Esophagus squamous epithelium (tissue), 5 donors: ENCODE measurements at regions of chr9 and their contacts with region 1.

Region 1: GRCh38 chr9:128412120-128412790 is 8.4 kb upstream of the CERCAM start:
- DNase-seq: no peak
- H3K4me3 ChIP-seq: no peak overlapping the region
- H3K27ac ChIP-seq: no peak overlapping the region
- H3K4me1 ChIP-seq: peaks cover 0 to 18% (median 0%) of the 10 kb centered on the region in 3 donors
- H3K27me3 ChIP-seq: peaks cover 0 to 62% (median 0%) of the 10 kb centered on the region in 4 donors
- CTCF ChIP-seq: peak in 5 of 6 experiments; percentile 10 to 56 (median 44)
- POLR2A ChIP-seq: no peak

Region 2: GRCh38 chr9:128361986-128362646 is 50.1 kb before region 1 on chr9:
- intact Hi-C with region 1: loop called (anchors 10 kb)
- DNase-seq: no peak
- H3K4me3 ChIP-seq: peak overlapping the region; percentile 24 to 67 (median 49)
- H3K27ac ChIP-seq: peak overlapping the region; percentile 32 to 70 (median 59)
- H3K4me1 ChIP-seq: peaks cover 15 to 37% (median 26%) of the 10 kb centered on the region in 3 donors
- H3K27me3 ChIP-seq: no peaks in the 10 kb centered on the region
- CTCF ChIP-seq: peak; percentile 80 to 91 (median 84)
- POLR2A ChIP-seq: no peak

Region 3: DNA sequence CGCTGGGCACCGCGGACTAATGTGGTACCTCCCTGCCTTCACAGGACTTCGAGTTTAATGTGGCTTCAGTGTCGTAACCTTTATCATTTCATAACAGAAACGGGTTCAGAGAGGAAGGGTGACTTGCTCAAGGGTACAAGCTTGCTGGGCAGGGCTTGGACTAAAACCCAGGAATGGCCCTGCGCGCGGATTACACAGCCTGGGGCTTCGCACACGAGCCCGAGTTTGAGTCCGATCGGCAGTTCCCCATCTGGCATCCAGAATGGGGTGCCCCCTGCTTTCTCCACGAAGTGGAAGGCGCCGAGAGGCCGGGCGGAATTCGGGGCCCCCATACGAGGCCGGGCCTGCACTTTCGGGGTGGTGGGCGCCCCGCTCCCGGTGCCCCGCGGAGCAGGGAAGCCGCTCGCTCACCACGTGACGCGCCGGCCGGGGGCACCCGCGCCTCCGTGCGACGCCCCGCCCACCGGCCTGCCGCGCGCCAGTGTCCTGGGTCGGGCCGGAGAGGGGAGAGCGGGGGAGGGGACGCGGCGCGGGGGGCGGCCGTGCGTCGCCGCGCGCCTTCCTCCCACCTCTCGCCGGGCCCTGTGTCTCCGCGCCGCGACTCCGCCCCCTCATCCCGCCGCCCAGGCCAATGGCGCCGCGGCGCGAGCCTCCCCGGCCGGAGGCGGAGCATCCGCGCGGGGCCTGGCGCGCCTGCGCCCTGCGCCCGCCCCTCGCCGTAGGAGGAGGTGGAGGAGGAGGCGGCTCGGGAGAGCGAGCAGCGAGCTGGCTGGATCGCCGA is 276.4 kb after region 1 on chr9 and contains the start of gene SET:
- intact Hi-C with region 1: no loop called
- DNase-seq: peak; percentile 38
- H3K4me3 ChIP-seq: peak within 1 kb of the TSS; percentile 78 to 97 (median 92)
- H3K27ac ChIP-seq: peak within 1 kb of the TSS; percentile 95 to 99 (median 98)
- H3K4me1 ChIP-seq: peaks cover 35 to 75% (median 40%) of the 10 kb centered on the region in 3 donors
- H3K27me3 ChIP-seq: no peaks in the 10 kb centered on the region
- CTCF ChIP-seq: peak in 2 of 6 experiments; percentile 2 to 35
- POLR2A ChIP-seq: peak in 3 of 4 donors; percentile 95 to 99 (median 96)
- total RNA-seq, gene SET: 83.5 to 253 (median 215) TPM